CD4-positive, alpha-beta memory T cell (primary cell): ENCODE measurements at regions of chr1 and their contacts with region 1.

Region 1: GRCh38 chr1:112715264-112716053 is at the start of gene PPM1J:
- DNase-seq: peak; percentile 96 to 97 (median 97)
- H3K4me3 ChIP-seq: peak within 1 kb of the TSS; percentile 58 to 72
- H3K4me3 Mint-ChIP-seq: peak within 1 kb of the TSS; percentile 81 to 96 (median 93)
- H3K27ac ChIP-seq: peak within 1 kb of the TSS; percentile 43
- H3K27ac Mint-ChIP-seq: peak within 1 kb of the TSS; percentile 81 to 96 (median 93)
- H3K4me1 ChIP-seq: peaks cover 22% of the 10 kb centered on the region
- H3K4me1 Mint-ChIP-seq: peaks cover 12 to 29% (median 19%) of the 10 kb centered on the region in 4 donors
- H3K27me3 ChIP-seq: peaks cover 8% of the 10 kb centered on the region
- H3K27me3 Mint-ChIP-seq: peaks cover 0 to 2% of the 10 kb centered on the region in 2 donors
- total RNA-seq, gene PPM1J: 0.76 TPM in 1 of 2 experiments, not detected in the other

Region 2: GRCh38 chr1:112390775-112391602 is 324.5 kb before region 1 on chr1:
- CTCF ChIA-PET with region 1: interaction called, 56 read pairs
- POLR2A ChIA-PET with region 1: interaction called, 3 read pairs
- intact Hi-C with region 1: no loop called
- DNase-seq: peak; percentile 72 to 79 (median 78)
- H3K4me3 ChIP-seq: no peak overlapping the region
- H3K4me3 Mint-ChIP-seq: peak overlapping the region in 5 of 8 donors; percentile 1 to 71 (median 40)
- H3K27ac ChIP-seq: no peak overlapping the region
- H3K27ac Mint-ChIP-seq: peak overlapping the region in 1 of 7 donors; percentile 9
- H3K4me1 ChIP-seq: peaks cover 13% of the 10 kb centered on the region
- H3K4me1 Mint-ChIP-seq: peaks cover 9 to 15% (median 10%) of the 10 kb centered on the region in 4 donors
- H3K27me3 ChIP-seq: peaks cover 4% of the 10 kb centered on the region
- H3K27me3 Mint-ChIP-seq: peaks cover 12 to 24% of the 10 kb centered on the region in 2 donors

Region 3: GRCh38 chr1:112674439-112674985 is 40.9 kb before region 1 on chr1 and contains the start of gene MOV10:
- CTCF ChIA-PET with region 1: interaction called, 27 read pairs
- POLR2A ChIA-PET with region 1: interaction called, 26 read pairs
- intact Hi-C with region 1: loop called (anchors 2 kb)
- DNase-seq: peak; percentile 59 to 74 (median 64)
- H3K4me3 ChIP-seq: peak within 1 kb of the TSS; percentile 71 to 82
- H3K4me3 Mint-ChIP-seq: peak within 1 kb of the TSS; percentile 96 to 98 (median 97)
- H3K27ac ChIP-seq: peak within 1 kb of the TSS; percentile 86
- H3K27ac Mint-ChIP-seq: peak within 1 kb of the TSS; percentile 93 to 98 (median 97)
- H3K4me1 ChIP-seq: peaks cover 53% of the 10 kb centered on the region
- H3K4me1 Mint-ChIP-seq: peaks cover 40 to 65% (median 52%) of the 10 kb centered on the region in 4 donors
- H3K27me3 ChIP-seq: no peaks in the 10 kb centered on the region
- H3K27me3 Mint-ChIP-seq: no peaks in the 10 kb centered on the region
- total RNA-seq, gene MOV10: 90.6 to 96.1 TPM

Region 4: GRCh38 chr1:112803906-112804762 is 88.7 kb after region 1 on chr1:
- CTCF ChIA-PET with region 1: interaction called, 47 read pairs
- POLR2A ChIA-PET with region 1: interaction called, 4 read pairs
- intact Hi-C with region 1: loop called (anchors 1 kb)
- DNase-seq: peak in 4 of 5 donors; percentile 15 to 25 (median 22)
- H3K4me3 ChIP-seq: no peak overlapping the region
- H3K4me3 Mint-ChIP-seq: no peak overlapping the region
- H3K27ac ChIP-seq: no peak overlapping the region
- H3K27ac Mint-ChIP-seq: no peak overlapping the region
- H3K4me1 ChIP-seq: no peaks in the 10 kb centered on the region
- H3K4me1 Mint-ChIP-seq: no peaks in the 10 kb centered on the region
- H3K27me3 ChIP-seq: no peaks in the 10 kb centered on the region
- H3K27me3 Mint-ChIP-seq: peaks cover 0 to 3% of the 10 kb centered on the region in 2 donors

Region 5: GRCh38 chr1:112882271-112882744 is 166.8 kb after region 1 on chr1:
- CTCF ChIA-PET with region 1: interaction called, 32 read pairs
- POLR2A ChIA-PET with region 1: no interaction called
- intact Hi-C with region 1: loop called (anchors 1 kb)
- DNase-seq: no peak
- H3K4me3 ChIP-seq: no peak overlapping the region
- H3K4me3 Mint-ChIP-seq: no peak overlapping the region
- H3K27ac ChIP-seq: no peak overlapping the region
- H3K27ac Mint-ChIP-seq: no peak overlapping the region
- H3K4me1 ChIP-seq: no peaks in the 10 kb centered on the region
- H3K4me1 Mint-ChIP-seq: no peaks in the 10 kb centered on the region
- H3K27me3 ChIP-seq: no peaks in the 10 kb centered on the region
- H3K27me3 Mint-ChIP-seq: peaks cover 1 to 2% of the 10 kb centered on the region in 2 donors

Region 6: GRCh38 chr1:113140588-113141446 is 425.4 kb after region 1 on chr1:
- CTCF ChIA-PET with region 1: interaction called, 13 read pairs
- POLR2A ChIA-PET with region 1: no interaction called
- intact Hi-C with region 1: no loop called
- DNase-seq: peak; percentile 40 to 51 (median 45)
- H3K4me3 ChIP-seq: no peak overlapping the region
- H3K4me3 Mint-ChIP-seq: peak overlapping the region in 1 of 8 donors; percentile 39
- H3K27ac ChIP-seq: no peak overlapping the region
- H3K27ac Mint-ChIP-seq: peak overlapping the region in 3 of 7 donors; percentile 63 to 84 (median 68)
- H3K4me1 ChIP-seq: peaks cover 13% of the 10 kb centered on the region
- H3K4me1 Mint-ChIP-seq: peaks cover 13 to 24% (median 17%) of the 10 kb centered on the region in 4 donors
- H3K27me3 ChIP-seq: no peaks in the 10 kb centered on the region
- H3K27me3 Mint-ChIP-seq: no peaks in the 10 kb centered on the region

Region 7: DNA sequence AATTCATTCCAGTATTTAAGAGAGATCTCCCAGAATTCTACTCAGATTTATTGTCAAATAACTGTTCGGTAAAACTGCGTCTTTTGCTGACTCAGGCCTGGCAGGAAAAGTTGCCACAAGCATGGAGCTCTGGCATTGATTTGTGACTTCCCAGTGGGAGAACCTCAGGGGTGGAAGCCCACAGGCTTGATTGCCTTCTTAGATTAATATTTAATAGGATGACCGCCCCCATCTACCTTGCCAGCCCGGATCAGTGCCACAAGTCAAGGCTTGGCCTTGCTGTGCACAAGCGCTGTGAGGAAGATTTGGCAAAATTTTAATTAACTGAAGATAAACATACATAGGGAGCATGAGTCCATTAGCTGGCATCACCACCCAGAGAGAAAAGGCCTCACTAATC is 451.0 kb after region 1 on chr1:
- CTCF ChIA-PET with region 1: no interaction called
- POLR2A ChIA-PET with region 1: no interaction called
- intact Hi-C with region 1: no loop called
- DNase-seq: no peak
- H3K4me3 ChIP-seq: no peak overlapping the region
- H3K4me3 Mint-ChIP-seq: no peak overlapping the region
- H3K27ac ChIP-seq: no peak overlapping the region
- H3K27ac Mint-ChIP-seq: no peak overlapping the region
- H3K4me1 ChIP-seq: no peaks in the 10 kb centered on the region
- H3K4me1 Mint-ChIP-seq: no peaks in the 10 kb centered on the region
- H3K27me3 ChIP-seq: no peaks in the 10 kb centered on the region
- H3K27me3 Mint-ChIP-seq: peaks cover 4 to 19% of the 10 kb centered on the region in 2 donors

Region 8: GRCh38 chr1:113452921-113453770 is 737.7 kb after region 1 on chr1:
- CTCF ChIA-PET with region 1: interaction called, 8 read pairs
- POLR2A ChIA-PET with region 1: no interaction called
- intact Hi-C with region 1: loop called (anchors 1 kb)
- DNase-seq: peak in 4 of 5 donors; percentile 9 to 15 (median 11)
- H3K4me3 ChIP-seq: no peak overlapping the region
- H3K4me3 Mint-ChIP-seq: no peak overlapping the region
- H3K27ac ChIP-seq: no peak overlapping the region
- H3K27ac Mint-ChIP-seq: no peak overlapping the region
- H3K4me1 ChIP-seq: no peaks in the 10 kb centered on the region
- H3K4me1 Mint-ChIP-seq: peaks cover 0 to 11% (median 7%) of the 10 kb centered on the region in 4 donors
- H3K27me3 ChIP-seq: no peaks in the 10 kb centered on the region
- H3K27me3 Mint-ChIP-seq: no peaks in the 10 kb centered on the region